Sigmoid colon (tissue), 7 donors: ENCODE measurements at regions of chr12 and their contacts with region 1.

Region 1: DNA sequence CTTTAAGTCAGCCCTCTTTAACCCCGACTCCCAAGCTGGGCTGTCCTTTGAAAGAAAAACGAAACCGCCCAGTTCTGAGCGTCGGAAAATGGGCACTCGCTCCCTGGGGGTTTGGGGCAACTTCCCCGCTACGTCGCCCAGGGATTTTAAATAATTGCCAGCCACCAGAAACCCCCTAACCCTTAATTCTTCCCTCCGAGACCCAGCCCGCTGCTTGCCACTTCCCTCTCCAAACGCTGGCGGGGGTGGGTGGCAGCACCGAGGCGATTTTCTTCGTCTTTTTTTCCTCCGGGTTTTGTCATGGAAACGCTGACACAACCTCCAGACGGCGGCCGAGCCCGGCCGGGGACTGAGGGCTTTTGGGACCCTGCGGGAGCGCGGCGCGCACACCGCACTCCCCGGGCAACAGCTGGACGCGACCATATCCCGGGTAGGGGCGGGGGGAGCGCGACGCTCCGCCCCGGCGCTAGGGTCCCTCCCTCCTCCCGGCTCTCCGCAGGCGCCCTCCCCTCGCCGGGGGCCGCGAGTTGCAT is at the start of gene CHST11:
- DNase-seq: peak; percentile 87
- H3K4me3 ChIP-seq: peak within 1 kb of the TSS; percentile 60 to 88 (median 79)
- H3K27ac ChIP-seq: peak within 1 kb of the TSS; percentile 59 to 86 (median 79)
- H3K4me1 ChIP-seq: peaks cover 0 to 29% (median 18%) of the 10 kb centered on the region in 4 donors
- H3K27me3 ChIP-seq: no peaks in the 10 kb centered on the region
- CTCF ChIP-seq: peak in 2 of 4 experiments; percentile 9 to 27
- EP300 ChIP-seq: no peak
- POLR2A ChIP-seq: no peak
- total RNA-seq, gene CHST11: 9.9 to 22.8 (median 13.6) TPM

Region 2: GRCh38 chr12:104177663-104178501 is 278.6 kb before region 1 on chr12:
- intact Hi-C with region 1: loop called (anchors 10 kb)
- DNase-seq: peak; percentile 97
- H3K4me3 ChIP-seq: no peak overlapping the region
- H3K27ac ChIP-seq: peak overlapping the region; percentile 83 to 91 (median 89)
- H3K4me1 ChIP-seq: peaks cover 0 to 70% (median 67%) of the 10 kb centered on the region in 4 donors
- H3K27me3 ChIP-seq: no peaks in the 10 kb centered on the region
- CTCF ChIP-seq: peak in 1 of 4 experiments; percentile 23
- EP300 ChIP-seq: peak in 2 of 4 donors; percentile 97 to 99
- POLR2A ChIP-seq: no peak

Region 3: GRCh38 chr12:104478396-104479122 is 22.1 kb after region 1 on chr12:
- intact Hi-C with region 1: no loop called
- DNase-seq: no peak
- H3K4me3 ChIP-seq: no peak overlapping the region
- H3K27ac ChIP-seq: peak overlapping the region in 1 of 4 donors; percentile 1
- H3K4me1 ChIP-seq: no peaks in the 10 kb centered on the region
- H3K27me3 ChIP-seq: no peaks in the 10 kb centered on the region
- CTCF ChIP-seq: no peak
- EP300 ChIP-seq: no peak
- POLR2A ChIP-seq: no peak

Region 4: GRCh38 chr12:104505095-104505818 is 48.8 kb after region 1 on chr12:
- intact Hi-C with region 1: no loop called
- DNase-seq: no peak
- H3K4me3 ChIP-seq: no peak overlapping the region
- H3K27ac ChIP-seq: no peak overlapping the region
- H3K4me1 ChIP-seq: peaks cover 0 to 21% (median 3%) of the 10 kb centered on the region in 4 donors
- H3K27me3 ChIP-seq: no peaks in the 10 kb centered on the region
- CTCF ChIP-seq: no peak
- EP300 ChIP-seq: no peak
- POLR2A ChIP-seq: no peak

Region 5: GRCh38 chr12:104604070-104604994 is 147.8 kb after region 1 on chr12:
- intact Hi-C with region 1: loop called (anchors 5 kb)
- DNase-seq: peak; percentile 92
- H3K4me3 ChIP-seq: no peak overlapping the region
- H3K27ac ChIP-seq: peak overlapping the region; percentile 58 to 69 (median 66)
- H3K4me1 ChIP-seq: peaks cover 2 to 20% (median 12%) of the 10 kb centered on the region in 4 donors
- H3K27me3 ChIP-seq: no peaks in the 10 kb centered on the region
- CTCF ChIP-seq: no peak
- EP300 ChIP-seq: no peak
- POLR2A ChIP-seq: no peak

Region 6: DNA sequence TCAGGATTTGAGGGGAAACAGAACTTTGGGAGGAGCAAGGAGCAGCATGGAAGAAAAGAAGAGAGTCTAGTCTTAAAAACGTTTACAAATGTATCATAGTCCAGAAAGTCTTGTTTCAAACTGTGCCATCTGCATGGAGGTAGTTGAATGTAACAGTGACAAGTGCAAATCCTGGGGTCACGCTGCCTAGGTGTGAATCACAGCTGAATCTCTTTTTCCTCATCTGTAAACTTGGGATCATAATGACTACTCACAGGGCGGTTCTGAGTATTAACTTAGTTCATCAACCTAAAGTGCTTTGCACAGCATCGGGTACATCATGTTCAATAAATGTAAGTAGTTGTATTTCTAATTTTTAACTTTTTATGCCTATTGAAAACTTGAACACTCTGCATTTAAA is 208.8 kb after region 1 on chr12:
- intact Hi-C with region 1: loop called (anchors 2 kb)
- DNase-seq: no peak
- H3K4me3 ChIP-seq: no peak overlapping the region
- H3K27ac ChIP-seq: peak overlapping the region in 3 of 4 donors; percentile 54 to 85 (median 82)
- H3K4me1 ChIP-seq: peaks cover 0 to 65% (median 52%) of the 10 kb centered on the region in 4 donors
- H3K27me3 ChIP-seq: no peaks in the 10 kb centered on the region
- CTCF ChIP-seq: no peak
- EP300 ChIP-seq: no peak
- POLR2A ChIP-seq: no peak

Region 7: GRCh38 chr12:104720339-104721038 is 264.0 kb after region 1 on chr12:
- intact Hi-C with region 1: loop called (anchors 5 kb)
- DNase-seq: no peak
- H3K4me3 ChIP-seq: peak overlapping the region in 3 of 4 donors; percentile 14 to 33 (median 23)
- H3K27ac ChIP-seq: peak overlapping the region in 3 of 4 donors; percentile 24 to 54 (median 50)
- H3K4me1 ChIP-seq: peaks cover 0 to 46% (median 36%) of the 10 kb centered on the region in 4 donors
- H3K27me3 ChIP-seq: no peaks in the 10 kb centered on the region
- CTCF ChIP-seq: no peak
- EP300 ChIP-seq: no peak
- POLR2A ChIP-seq: no peak

Region 8: DNA sequence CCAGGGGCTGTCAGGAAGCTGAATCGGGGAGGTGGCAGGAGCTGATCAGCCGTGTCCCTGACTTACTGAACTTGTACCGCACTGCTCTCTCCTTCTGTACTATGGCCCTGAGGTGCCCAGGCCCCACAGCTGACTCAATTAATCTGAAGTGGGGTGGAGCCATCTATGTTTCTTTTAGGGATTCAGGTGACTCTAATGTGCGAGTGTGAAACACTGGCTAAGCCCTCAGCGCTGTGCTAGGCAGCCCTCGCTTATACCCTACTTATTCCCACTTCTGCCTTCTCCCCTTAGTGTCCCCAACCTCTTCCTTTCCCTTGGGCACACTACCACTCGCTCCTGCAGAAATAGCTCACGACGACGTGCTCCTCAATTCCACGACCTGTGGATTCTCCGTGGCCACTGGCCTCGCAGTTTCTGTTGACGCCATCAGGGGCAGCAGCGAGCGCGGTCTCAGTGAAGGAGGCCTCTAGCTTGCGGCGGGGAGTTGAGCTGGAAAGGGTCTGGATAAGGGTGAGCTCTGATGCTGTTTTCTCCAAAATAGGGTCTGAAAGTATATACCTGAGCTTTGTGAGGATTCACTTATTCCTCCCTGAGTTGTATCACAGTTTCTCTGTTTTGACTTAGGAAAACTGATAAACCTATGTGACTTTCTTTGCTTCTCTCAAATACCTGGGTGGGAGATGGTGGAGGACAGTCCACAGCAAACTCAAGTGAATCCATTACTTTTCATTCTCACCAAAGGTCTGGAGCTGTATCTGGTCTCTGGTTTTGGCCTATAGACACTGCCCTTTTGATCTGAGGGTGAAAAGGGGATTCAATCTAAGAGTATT is 334.0 kb after region 1 on chr12:
- intact Hi-C with region 1: loop called (anchors 5 kb)
- DNase-seq: peak; percentile 67
- H3K4me3 ChIP-seq: no peak overlapping the region
- H3K27ac ChIP-seq: no peak overlapping the region
- H3K4me1 ChIP-seq: peaks cover 0 to 18% (median 11%) of the 10 kb centered on the region in 4 donors
- H3K27me3 ChIP-seq: no peaks in the 10 kb centered on the region
- CTCF ChIP-seq: peak in 3 of 4 experiments; percentile 29 to 62 (median 42)
- EP300 ChIP-seq: no peak
- POLR2A ChIP-seq: no peak

Region 9: GRCh38 chr12:104877123-104877705 is 420.7 kb after region 1 on chr12:
- intact Hi-C with region 1: loop called (anchors 5 kb)
- DNase-seq: no peak
- H3K4me3 ChIP-seq: no peak overlapping the region
- H3K27ac ChIP-seq: no peak overlapping the region
- H3K4me1 ChIP-seq: peaks cover 0 to 12% (median 7%) of the 10 kb centered on the region in 4 donors
- H3K27me3 ChIP-seq: no peaks in the 10 kb centered on the region
- CTCF ChIP-seq: peak; percentile 50 to 68 (median 62)
- EP300 ChIP-seq: no peak
- POLR2A ChIP-seq: no peak